PC-3 (cell line): ENCODE measurements at regions of chr5 and their contacts with region 1.

Region 1: GRCh38 chr5:81425569-81425968 is 31.6 kb upstream of the ACOT12 start:
- DNase-seq: peak; percentile 52
- ATAC-seq: peak; percentile 7; the same call in 1 of the 2 replicates
- H3K4me3 ChIP-seq: no peak overlapping the region
- H3K27ac ChIP-seq: no peak overlapping the region
- H3K4me1 ChIP-seq: peaks cover 73% of the 10 kb centered on the region
- H3K27me3 ChIP-seq: no peaks in the 10 kb centered on the region
- CTCF ChIP-seq: peak; percentile 68

Region 2: GRCh38 chr5:81513982-81514381 is 88.4 kb after region 1 on chr5:
- CTCF ChIA-PET with region 1: no interaction called
- POLR2A ChIA-PET with region 1: no interaction called
- intact Hi-C with region 1: loop called (anchors 2 kb)
- DNase-seq: peak; percentile 34
- ATAC-seq: 0 out of 2 replicates have a peak, but pooled peaks have one; percentile 31
- H3K4me3 ChIP-seq: no peak overlapping the region
- H3K27ac ChIP-seq: no peak overlapping the region
- H3K4me1 ChIP-seq: no peaks in the 10 kb centered on the region; the same call in 1 of the 2 replicates
- H3K27me3 ChIP-seq: no peaks in the 10 kb centered on the region
- CTCF ChIP-seq: peak; percentile 53

Region 3: GRCh38 chr5:81601919-81602318 is 176.3 kb after region 1 on chr5:
- CTCF ChIA-PET with region 1: no interaction called
- POLR2A ChIA-PET with region 1: no interaction called
- intact Hi-C with region 1: no loop called
- DNase-seq: peak; percentile 40
- ATAC-seq: peak; percentile 98
- H3K4me3 ChIP-seq: no peak overlapping the region
- H3K27ac ChIP-seq: no peak overlapping the region
- H3K4me1 ChIP-seq: 0 out of 2 replicates have a peak, but pooled peaks cover 3% of the 10 kb centered on the region
- H3K27me3 ChIP-seq: no peaks in the 10 kb centered on the region
- CTCF ChIP-seq: no peak

Region 4: GRCh38 chr5:81650987-81651386 is 225.4 kb after region 1 on chr5:
- CTCF ChIA-PET with region 1: no interaction called
- POLR2A ChIA-PET with region 1: no interaction called
- intact Hi-C with region 1: no loop called
- DNase-seq: no peak
- ATAC-seq: no peak
- H3K4me3 ChIP-seq: no peak overlapping the region
- H3K27ac ChIP-seq: no peak overlapping the region
- H3K4me1 ChIP-seq: no peaks in the 10 kb centered on the region
- H3K27me3 ChIP-seq: no peaks in the 10 kb centered on the region
- CTCF ChIP-seq: no peak

Region 5: DNA sequence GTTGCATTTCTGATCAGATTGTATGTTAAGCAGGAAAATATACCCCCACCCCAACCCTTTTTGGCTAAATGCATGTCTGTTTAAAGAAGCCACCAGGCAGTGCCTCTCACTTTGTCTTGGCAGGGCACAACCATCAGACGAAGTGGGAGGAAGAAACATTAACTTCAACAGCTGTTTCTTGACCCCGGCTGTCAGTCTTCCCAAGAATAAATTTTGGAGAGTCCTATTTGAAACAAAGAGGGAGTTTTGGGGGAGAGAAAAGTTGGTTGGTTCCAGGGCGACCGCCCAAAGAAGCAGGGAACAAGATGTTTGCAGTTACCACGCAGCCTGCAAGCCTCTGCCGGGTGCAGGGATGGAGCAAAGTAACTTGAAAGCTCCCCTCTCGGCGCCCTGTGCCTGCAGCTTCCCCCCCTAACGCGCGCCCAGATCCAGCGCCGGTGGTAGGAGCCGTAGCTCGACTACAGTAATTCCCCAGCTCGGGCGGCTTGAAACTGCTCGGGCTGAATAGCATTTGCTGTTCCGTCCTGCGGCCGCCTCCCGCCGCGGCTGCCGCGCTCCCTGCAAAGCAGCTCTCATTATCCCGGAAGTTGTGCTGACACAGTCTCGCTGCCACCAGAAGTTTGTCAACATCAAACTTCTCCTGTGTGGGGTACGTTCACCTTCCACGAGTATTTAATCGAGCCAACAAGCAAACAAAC is 426.1 kb after region 1 on chr5:
- CTCF ChIA-PET with region 1: no interaction called
- POLR2A ChIA-PET with region 1: no interaction called
- intact Hi-C with region 1: loop called (anchors 5 kb)
- DNase-seq: peak; percentile 86
- ATAC-seq: peak; percentile 92
- H3K4me3 ChIP-seq: peak overlapping the region; percentile 67
- H3K27ac ChIP-seq: peak overlapping the region; percentile 71
- H3K4me1 ChIP-seq: peaks cover 10% of the 10 kb centered on the region
- H3K27me3 ChIP-seq: no peaks in the 10 kb centered on the region
- CTCF ChIP-seq: no peak

Region 6: GRCh38 chr5:82165740-82166530 is 740.4 kb after region 1 on chr5:
- CTCF ChIA-PET with region 1: no interaction called
- POLR2A ChIA-PET with region 1: interaction called, 3 read pairs
- intact Hi-C with region 1: loop called (anchors 1 kb)
- DNase-seq: peak; percentile 73
- ATAC-seq: peak; percentile 78
- H3K4me3 ChIP-seq: no peak overlapping the region
- H3K27ac ChIP-seq: peak overlapping the region; percentile 68; the same call in 1 of the 2 replicates
- H3K4me1 ChIP-seq: peaks cover 28% of the 10 kb centered on the region
- H3K27me3 ChIP-seq: no peaks in the 10 kb centered on the region
- CTCF ChIP-seq: peak; percentile 88